ENCODE measurements at regions of chr1 and their contacts with region 1.

Region 1: DNA sequence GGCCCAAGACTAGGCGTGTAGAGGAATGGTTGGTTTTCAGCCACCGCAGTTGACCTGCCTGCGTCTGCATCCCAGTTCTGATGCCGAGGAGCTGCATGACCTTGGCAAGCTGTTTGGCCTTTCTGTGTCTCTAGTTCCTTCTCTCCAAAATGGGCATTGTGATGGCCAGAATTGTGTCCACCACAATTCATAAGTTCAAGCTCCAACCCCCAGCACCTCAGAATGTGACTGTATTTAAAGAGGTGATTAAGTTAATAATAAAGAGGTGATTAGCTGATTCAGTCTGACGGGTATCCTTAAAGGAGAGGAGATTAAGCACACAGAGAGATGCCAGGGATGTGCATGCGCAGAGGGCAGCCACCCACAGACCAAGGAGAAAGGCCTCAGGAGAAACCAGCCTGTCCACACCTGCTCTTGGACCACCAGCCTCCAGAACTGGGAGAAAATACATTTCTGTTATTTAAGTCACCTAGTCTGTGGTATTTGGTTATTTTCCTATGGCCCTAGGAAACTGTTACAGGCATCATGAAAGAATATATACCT is 28.5 kb downstream of the MAB21L3 start:
- DNase-seq: no peak
- H3K4me3 ChIP-seq: no peak overlapping the region
- H3K27me3 ChIP-seq: 0 out of 2 replicates have a peak, but pooled peaks cover under 1% of the 10 kb centered on the region
- CTCF ChIP-seq: no peak

Region 2: GRCh38 chr1:116122955-116123757 is 16.5 kb before region 1 on chr1:
- CTCF ChIA-PET with region 1: interaction called, 16 read pairs
- POLR2A ChIA-PET with region 1: no interaction called
- DNase-seq: peak; percentile 86
- H3K4me3 ChIP-seq: no peak overlapping the region
- H3K27me3 ChIP-seq: peaks cover 3% of the 10 kb centered on the region
- CTCF ChIP-seq: no peak

Region 3: GRCh38 chr1:116151739-116152576 is 12.3 kb after region 1 on chr1:
- CTCF ChIA-PET with region 1: interaction called, 52 read pairs
- POLR2A ChIA-PET with region 1: no interaction called
- DNase-seq: peak; percentile 9
- H3K4me3 ChIP-seq: peak overlapping the region; percentile 44
- H3K27me3 ChIP-seq: peaks cover 16% of the 10 kb centered on the region
- CTCF ChIP-seq: peak; percentile 69

Region 4: GRCh38 chr1:116498789-116499628 is 359.3 kb after region 1 on chr1:
- CTCF ChIA-PET with region 1: interaction called, 201 read pairs
- POLR2A ChIA-PET with region 1: no interaction called
- DNase-seq: no peak
- H3K4me3 ChIP-seq: no peak overlapping the region
- H3K27me3 ChIP-seq: no peaks in the 10 kb centered on the region
- CTCF ChIP-seq: peak; percentile 78